H1 (cell line): ENCODE measurements at regions of chr3 and their contacts with region 1.

Region 1: DNA sequence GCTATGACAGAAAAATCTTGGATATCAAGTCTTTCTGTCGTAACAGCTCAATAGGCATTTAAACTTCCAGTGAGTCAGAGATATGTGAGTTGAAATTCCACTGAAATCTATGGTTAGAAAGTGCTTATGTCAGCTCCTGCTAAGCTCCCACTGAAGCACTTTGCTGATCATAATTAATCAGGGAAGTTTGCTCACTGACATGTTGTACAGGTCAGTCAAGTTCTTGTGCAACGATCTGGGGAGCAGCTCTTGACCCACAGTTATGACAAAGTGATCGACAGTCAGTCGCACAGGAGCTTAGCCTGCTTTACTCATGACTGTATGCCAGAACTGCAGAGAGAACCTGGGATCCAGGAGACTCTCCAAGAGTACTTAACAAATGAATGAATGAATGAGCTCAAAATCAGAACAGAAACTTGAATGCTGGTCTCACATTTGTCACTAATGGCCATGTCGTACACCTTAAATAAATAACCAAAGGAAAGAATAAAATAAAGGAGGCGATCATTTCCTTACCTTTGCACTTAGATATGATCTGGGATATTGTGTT is 453.6 kb downstream of the SOX2 start:
- DNase-seq: no peak
- H3K4me3 ChIP-seq: no peak overlapping the region
- H3K27ac ChIP-seq: no peak overlapping the region
- H3K4me1 ChIP-seq: peaks cover 0 to 3% (median 1%) of the 10 kb centered on the region in 4 experiments; a peak in 2 of 7 replicates
- H3K27me3 ChIP-seq: no peaks in the 10 kb centered on the region
- CTCF ChIP-seq: no peak
- EP300 ChIP-seq: no peak
- POLR2A ChIP-seq: no peak
- RAD21 ChIP-seq: no peak

Region 2: GRCh38 chr3:182182531-182182968 is 17.2 kb after region 1 on chr3:
- CTCF ChIA-PET with region 1: interaction called, 12 read pairs
- POLR2A ChIA-PET with region 1: no interaction called
- DNase-seq: no peak
- H3K4me3 ChIP-seq: no peak overlapping the region
- H3K27ac ChIP-seq: no peak overlapping the region
- H3K4me1 ChIP-seq: peaks cover 0 to 27% (median 10%) of the 10 kb centered on the region in 4 experiments; a peak in 5 of 7 replicates
- H3K27me3 ChIP-seq: no peaks in the 10 kb centered on the region
- CTCF ChIP-seq: no peak
- EP300 ChIP-seq: no peak
- POLR2A ChIP-seq: no peak
- RAD21 ChIP-seq: no peak